ENCODE measurements at regions of chr7 and their contacts with region 1.

Region 1: DNA sequence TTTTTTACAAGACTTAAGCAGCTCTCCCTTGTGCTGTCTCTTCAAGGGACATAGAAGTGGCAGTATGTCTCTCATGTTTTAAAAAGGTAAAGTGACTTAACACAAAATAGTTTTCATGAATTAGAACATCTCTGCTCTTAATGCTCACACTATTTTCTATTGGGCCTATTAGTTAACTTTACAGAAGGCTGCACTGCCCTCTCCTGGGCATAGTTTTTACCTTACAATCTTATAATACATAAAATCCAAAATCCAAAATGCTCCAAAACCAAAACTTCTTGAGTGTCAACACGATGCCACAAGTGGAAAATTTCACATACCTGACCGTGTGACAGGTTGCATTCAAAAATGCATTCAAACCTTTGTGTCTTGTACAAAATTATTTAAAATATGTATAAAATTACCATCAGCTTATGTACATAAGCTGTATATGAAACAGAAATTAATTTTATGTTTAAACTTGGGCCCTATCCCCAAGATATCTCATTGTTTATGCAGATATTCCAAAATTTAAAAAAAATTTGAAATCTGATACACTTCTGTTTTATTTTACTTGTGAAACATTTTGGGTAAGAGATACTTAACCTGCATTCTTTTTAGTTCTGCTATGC is 25.8 kb downstream of the TES start:
- DNase-seq: peak in 1 of 2 donors; percentile 82
- ATAC-seq: peak; percentile 65 to 75 (median 73)
- H3K4me3 ChIP-seq: no peak overlapping the region
- H3K4me3 Mint-ChIP-seq: peak overlapping the region; percentile 57
- H3K27ac ChIP-seq: peak overlapping the region; percentile 31
- H3K27ac Mint-ChIP-seq: peak overlapping the region; percentile 93 to 94
- H3K4me1 ChIP-seq: peaks cover 21% of the 10 kb centered on the region
- H3K4me1 Mint-ChIP-seq: peaks cover 78 to 82% of the 10 kb centered on the region in 2 donors
- H3K27me3 ChIP-seq: no peaks in the 10 kb centered on the region
- H3K27me3 Mint-ChIP-seq: no peaks in the 10 kb centered on the region
- CTCF ChIP-seq: peak; percentile 87

Region 2: GRCh38 chr7:116180302-116180701 is 55.8 kb before region 1 on chr7:
- intact Hi-C with region 1: loop called (anchors 1 kb)
- DNase-seq: peak in 1 of 2 donors; percentile 80
- ATAC-seq: peak; percentile 82 to 97 (median 89)
- H3K4me3 ChIP-seq: no peak overlapping the region
- H3K4me3 Mint-ChIP-seq: no peak overlapping the region
- H3K27ac ChIP-seq: no peak overlapping the region
- H3K27ac Mint-ChIP-seq: no peak overlapping the region
- H3K4me1 ChIP-seq: no peaks in the 10 kb centered on the region
- H3K4me1 Mint-ChIP-seq: peaks cover 4% of the 10 kb centered on the region in 2 donors
- H3K27me3 ChIP-seq: no peaks in the 10 kb centered on the region
- H3K27me3 Mint-ChIP-seq: no peaks in the 10 kb centered on the region
- CTCF ChIP-seq: peak; percentile 91

Region 3: GRCh38 chr7:116224492-116225098 is 11.5 kb before region 1 on chr7:
- intact Hi-C with region 1: loop called (anchors 1 kb)
- DNase-seq: peak in 1 of 2 donors; percentile 67
- ATAC-seq: peak; percentile 84 to 87 (median 86)
- H3K4me3 ChIP-seq: peak overlapping the region; percentile 24
- H3K4me3 Mint-ChIP-seq: peak overlapping the region; percentile 80
- H3K27ac ChIP-seq: peak overlapping the region; percentile 69
- H3K27ac Mint-ChIP-seq: peak overlapping the region; percentile 89 to 93
- H3K4me1 ChIP-seq: peaks cover 26% of the 10 kb centered on the region
- H3K4me1 Mint-ChIP-seq: peaks cover 82 to 87% of the 10 kb centered on the region in 2 donors
- H3K27me3 ChIP-seq: no peaks in the 10 kb centered on the region
- H3K27me3 Mint-ChIP-seq: no peaks in the 10 kb centered on the region
- CTCF ChIP-seq: no peak

Region 4: GRCh38 chr7:116258734-116259133 is 22.6 kb after region 1 on chr7:
- intact Hi-C with region 1: no loop called
- DNase-seq: peak in 1 of 2 donors; percentile 73
- ATAC-seq: peak; percentile 66 to 80 (median 75)
- H3K4me3 ChIP-seq: no peak overlapping the region
- H3K4me3 Mint-ChIP-seq: no peak overlapping the region
- H3K27ac ChIP-seq: no peak overlapping the region
- H3K27ac Mint-ChIP-seq: peak overlapping the region; percentile 66 to 73
- H3K4me1 ChIP-seq: no peaks in the 10 kb centered on the region
- H3K4me1 Mint-ChIP-seq: peaks cover 34 to 37% of the 10 kb centered on the region in 2 donors
- H3K27me3 ChIP-seq: no peaks in the 10 kb centered on the region
- H3K27me3 Mint-ChIP-seq: no peaks in the 10 kb centered on the region
- CTCF ChIP-seq: peak; percentile 75